Heart left ventricle (tissue), 16 donors: ENCODE measurements at regions of chr4 and their contacts with region 1.

Region 1: GRCh38 chr4:111641955-111642579 is 503.2 kb upstream of the FAM241A start:
- DNase-seq: peak in 3 of 5 donors; percentile 14 to 33 (median 32)
- ATAC-seq: peak in 3 of 4 donors; percentile 50 to 64 (median 61)
- H3K4me3 ChIP-seq: no peak overlapping the region
- H3K27ac ChIP-seq: no peak overlapping the region
- H3K4me1 ChIP-seq: no peaks in the 10 kb centered on the region
- H3K27me3 ChIP-seq: peaks cover 0 to 6% (median 0%) of the 10 kb centered on the region in 9 donors
- CTCF ChIP-seq: peak; percentile 36 to 78 (median 64)
- POLR2A ChIP-seq: no peak

Region 2: GRCh38 chr4:111854494-111855087 is 212.5 kb after region 1 on chr4:
- intact Hi-C with region 1: loop called in 9 of 10 experiments (anchors 5 to 10 kb)
- DNase-seq: no peak
- ATAC-seq: no peak
- H3K4me3 ChIP-seq: no peak overlapping the region
- H3K27ac ChIP-seq: no peak overlapping the region
- H3K4me1 ChIP-seq: no peaks in the 10 kb centered on the region
- H3K27me3 ChIP-seq: no peaks in the 10 kb centered on the region
- CTCF ChIP-seq: peak in 11 of 12 donors; percentile 13 to 61 (median 42)
- POLR2A ChIP-seq: no peak

Region 3: DNA sequence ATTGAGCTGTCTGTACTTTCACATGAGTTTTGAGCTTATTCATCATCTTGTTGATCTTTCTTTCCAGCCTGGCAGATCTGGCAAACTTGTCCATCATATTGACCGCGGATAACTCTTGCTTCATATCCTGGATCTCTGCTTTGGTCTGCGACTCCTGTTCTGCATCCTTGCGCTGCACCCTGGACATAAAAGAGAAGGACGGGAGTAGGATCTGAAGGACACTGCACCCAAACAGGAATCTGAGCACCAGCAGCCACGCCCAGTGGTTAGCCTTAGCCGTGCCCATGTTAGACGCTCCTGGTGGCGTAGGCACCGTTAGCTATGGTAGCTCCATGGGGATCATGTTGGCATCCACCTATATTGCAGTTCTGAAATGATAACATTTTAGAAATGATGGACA is 1051.4 kb after region 1 on chr4:
- intact Hi-C with region 1: no loop called
- DNase-seq: no peak
- ATAC-seq: no peak
- H3K4me3 ChIP-seq: no peak overlapping the region
- H3K27ac ChIP-seq: no peak overlapping the region
- H3K4me1 ChIP-seq: no peaks in the 10 kb centered on the region
- H3K27me3 ChIP-seq: no peaks in the 10 kb centered on the region
- CTCF ChIP-seq: no peak
- POLR2A ChIP-seq: no peak